GM12878 (cell line): ENCODE measurements at regions of chr9 and their contacts with region 1.

Region 1: GRCh38 chr9:111926421-111926875 is 29.8 kb downstream of the UGCG start:
- DNase-seq: peak; percentile 86
- ATAC-seq: peak; percentile 98
- H3K4me3 ChIP-seq: no peak overlapping the region
- H3K27ac ChIP-seq: peak overlapping the region; percentile 75
- H3K4me1 ChIP-seq: peaks cover 13% of the 10 kb centered on the region; the same call in 1 of the 2 replicates
- H3K27me3 ChIP-seq: no peaks in the 10 kb centered on the region
- CTCF ChIP-seq: no peak
- EP300 ChIP-seq: peak; percentile 73 to 76; a peak in 3 of 4 replicates
- POLR2A ChIP-seq: no peak
- RAD21 ChIP-seq: no peak

Region 2: DNA sequence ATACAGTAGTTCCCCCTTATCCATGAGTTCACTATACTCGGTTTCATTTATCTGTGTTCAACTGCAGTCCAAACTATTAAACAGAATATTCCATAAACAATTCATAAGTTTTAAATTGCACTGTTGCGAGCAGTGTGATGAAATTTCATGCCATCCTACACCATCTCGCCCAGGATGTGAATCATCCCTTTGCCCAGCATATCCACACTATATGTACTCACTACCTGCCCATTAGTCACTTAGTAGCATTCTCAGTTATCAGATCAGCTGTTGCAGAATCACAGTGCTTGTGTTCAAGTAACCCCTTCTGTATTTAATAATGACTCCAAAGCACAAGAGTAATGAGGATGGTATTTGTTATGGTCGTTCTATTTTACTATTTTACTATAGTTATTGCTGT is 183.2 kb before region 1 on chr9:
- CTCF ChIA-PET with region 1: no interaction called
- POLR2A ChIA-PET with region 1: no interaction called
- RAD21 ChIA-PET with region 1: no interaction called
- SMC1A ChIA-PET with region 1: no interaction called
- in situ Hi-C with region 1: no loop called
- intact Hi-C with region 1: no loop called
- DNase-seq: no peak
- ATAC-seq: no peak
- H3K4me3 ChIP-seq: no peak overlapping the region
- H3K27ac ChIP-seq: no peak overlapping the region
- H3K4me1 ChIP-seq: no peaks in the 10 kb centered on the region
- H3K27me3 ChIP-seq: no peaks in the 10 kb centered on the region
- CTCF ChIP-seq: no peak
- EP300 ChIP-seq: no peak
- POLR2A ChIP-seq: no peak
- RAD21 ChIP-seq: no peak

Region 3: DNA sequence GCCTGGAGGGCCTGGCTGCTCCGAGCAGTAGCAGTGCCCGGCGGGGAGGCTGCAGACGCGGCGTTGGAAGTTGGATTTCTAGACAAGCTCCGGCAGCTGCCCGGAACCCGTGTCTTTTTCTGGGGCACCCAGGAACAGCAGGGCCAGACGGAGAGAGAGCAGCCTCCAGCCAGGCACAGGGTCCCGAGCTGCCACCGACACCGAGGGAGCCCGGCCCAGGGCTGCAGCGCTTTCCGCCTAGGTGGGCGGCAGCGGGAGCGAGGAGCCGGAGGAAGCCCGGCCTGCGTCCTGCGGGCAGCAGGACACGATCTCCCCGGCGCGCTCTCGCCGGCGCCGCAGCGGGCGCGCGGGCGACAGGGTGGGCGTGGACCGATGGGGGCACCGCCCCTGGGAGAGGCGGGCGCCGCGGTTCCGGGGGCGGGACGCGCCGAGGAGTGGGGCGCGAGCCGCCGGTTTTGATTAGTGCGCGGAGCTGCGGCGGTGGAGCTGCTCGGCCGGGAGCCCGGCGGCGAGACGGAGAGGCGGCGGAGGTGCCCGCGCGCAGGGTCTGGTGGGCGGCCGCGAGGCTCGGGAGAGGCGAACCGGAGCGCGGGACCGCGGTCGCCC is 30.0 kb before region 1 on chr9 and contains the start of gene UGCG:
- CTCF ChIA-PET with region 1: no interaction called
- POLR2A ChIA-PET with region 1: interaction called, 4 read pairs
- RAD21 ChIA-PET with region 1: interaction called, 6 read pairs
- SMC1A ChIA-PET with region 1: interaction called, 16 read pairs
- in situ Hi-C with region 1: no loop called
- intact Hi-C with region 1: no loop called
- DNase-seq: no peak
- ATAC-seq: peak; percentile 79
- H3K4me3 ChIP-seq: peak within 1 kb of the TSS; percentile 80
- H3K27ac ChIP-seq: peak within 1 kb of the TSS; percentile 93
- H3K4me1 ChIP-seq: no peaks in the 10 kb centered on the region; the same call in 1 of the 2 replicates
- H3K27me3 ChIP-seq: no peaks in the 10 kb centered on the region
- CTCF ChIP-seq: no peak
- EP300 ChIP-seq: 0 out of 4 replicates have a peak, but pooled peaks of 1 of the 2 experiments have one; percentile 14
- POLR2A ChIP-seq: peak; percentile 93
- RAD21 ChIP-seq: 0 out of 2 replicates have a peak, but pooled peaks have one; percentile 2
- polyA plus RNA-seq, gene UGCG: 48.0 to 62.1 TPM

Region 4: DNA sequence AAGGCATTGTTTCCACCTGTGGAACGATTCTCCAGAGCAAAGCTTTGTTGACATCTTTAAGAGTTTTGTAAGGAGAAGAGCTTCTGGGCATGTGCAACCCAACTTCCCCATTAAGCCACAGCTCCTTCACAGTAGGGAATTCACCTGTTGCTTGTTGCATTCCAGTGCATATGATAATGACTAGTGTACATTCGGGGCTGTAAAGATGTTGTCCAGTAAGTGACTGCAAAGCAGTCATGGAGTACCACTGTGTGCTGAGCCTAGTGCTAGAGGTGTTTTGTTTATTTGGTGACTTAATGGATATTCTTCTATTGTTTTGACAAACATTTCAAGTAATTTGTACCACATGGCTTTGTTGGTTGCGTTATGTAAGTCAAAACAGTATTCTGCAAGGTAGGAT is 17.0 kb before region 1 on chr9:
- CTCF ChIA-PET with region 1: interaction called, 25 read pairs
- POLR2A ChIA-PET with region 1: interaction called, 11 read pairs
- RAD21 ChIA-PET with region 1: interaction called, 20 read pairs
- SMC1A ChIA-PET with region 1: interaction called, 43 read pairs
- in situ Hi-C with region 1: no loop called
- intact Hi-C with region 1: no loop called
- DNase-seq: no peak
- ATAC-seq: peak; percentile 65
- H3K4me3 ChIP-seq: peak overlapping the region; percentile 36; the same call in 1 of the 2 replicates
- H3K27ac ChIP-seq: peak overlapping the region; percentile 70; the same call in 1 of the 2 replicates
- H3K4me1 ChIP-seq: peaks cover 62% of the 10 kb centered on the region
- H3K27me3 ChIP-seq: no peaks in the 10 kb centered on the region
- CTCF ChIP-seq: no peak
- EP300 ChIP-seq: no peak
- POLR2A ChIP-seq: no peak
- RAD21 ChIP-seq: no peak

Region 5: DNA sequence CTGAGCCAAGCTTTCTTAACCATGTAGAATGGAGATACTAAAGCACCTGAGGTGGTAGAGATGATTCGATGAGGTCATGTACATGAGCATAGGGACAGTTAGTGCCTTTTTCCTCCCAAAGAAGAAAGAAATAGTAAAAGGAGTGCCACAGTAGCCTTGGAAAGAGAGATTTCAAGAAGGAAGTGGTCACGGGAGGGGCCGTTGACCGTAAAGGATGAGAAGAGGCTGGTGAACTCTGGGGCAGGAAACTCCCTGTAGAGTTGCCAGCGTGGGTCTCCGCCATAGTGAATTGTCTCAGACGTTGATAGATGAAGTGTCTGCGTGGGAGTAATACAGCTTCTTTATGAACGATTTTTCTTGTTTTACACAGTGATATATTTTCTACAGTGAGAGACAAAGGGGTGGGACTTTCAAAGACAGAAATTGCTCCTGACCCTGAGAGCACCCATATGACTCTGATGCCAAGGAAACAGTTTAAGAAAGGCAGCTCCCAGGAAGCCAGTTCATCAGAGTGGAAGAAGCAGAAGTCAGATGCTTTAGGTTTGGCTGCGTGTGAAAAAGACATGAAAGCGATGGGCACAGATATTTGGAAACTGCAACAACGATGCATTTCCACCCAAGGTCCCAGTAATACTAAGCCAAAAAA is 11.5 kb after region 1 on chr9:
- CTCF ChIA-PET with region 1: interaction called, 8 read pairs
- POLR2A ChIA-PET with region 1: interaction called, 16 read pairs
- RAD21 ChIA-PET with region 1: interaction called, 24 read pairs
- SMC1A ChIA-PET with region 1: interaction called, 46 read pairs
- in situ Hi-C with region 1: no loop called
- intact Hi-C with region 1: no loop called
- DNase-seq: peak; percentile 74
- ATAC-seq: peak; percentile 90
- H3K4me3 ChIP-seq: no peak overlapping the region
- H3K27ac ChIP-seq: peak overlapping the region; percentile 80
- H3K4me1 ChIP-seq: peaks cover 21% of the 10 kb centered on the region
- H3K27me3 ChIP-seq: no peaks in the 10 kb centered on the region
- CTCF ChIP-seq: no peak
- EP300 ChIP-seq: peak; percentile 68 to 77; a peak in 2 of 4 replicates
- POLR2A ChIP-seq: no peak; the same call in none of the 2 replicates
- RAD21 ChIP-seq: no peak

Region 6: DNA sequence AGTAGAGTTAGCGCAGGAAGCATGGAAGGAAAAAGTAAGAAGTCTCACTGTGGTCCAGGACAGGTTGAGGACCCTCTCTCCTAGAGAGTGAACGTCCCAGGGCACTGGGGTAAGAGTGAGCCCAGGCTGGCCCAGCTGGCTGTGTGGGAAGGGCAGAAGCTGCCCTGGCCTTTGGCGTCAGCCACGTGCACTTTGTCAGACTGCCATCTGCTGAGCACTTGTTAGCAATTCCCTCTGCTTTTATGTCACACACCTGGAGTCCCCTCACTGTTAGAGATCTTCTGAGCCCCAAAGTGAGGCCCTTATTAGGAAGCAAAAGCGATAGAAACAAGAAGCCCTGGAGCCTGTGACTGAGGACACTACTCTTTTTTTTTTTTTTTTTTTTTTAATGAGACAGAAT is 49.3 kb after region 1 on chr9:
- CTCF ChIA-PET with region 1: interaction called, 7 read pairs
- POLR2A ChIA-PET with region 1: interaction called, 4 read pairs
- RAD21 ChIA-PET with region 1: interaction called, 3 read pairs
- SMC1A ChIA-PET with region 1: interaction called, 22 read pairs
- in situ Hi-C with region 1: no loop called
- intact Hi-C with region 1: no loop called
- DNase-seq: peak; percentile 39
- ATAC-seq: peak; percentile 79
- H3K4me3 ChIP-seq: no peak overlapping the region
- H3K27ac ChIP-seq: no peak overlapping the region
- H3K4me1 ChIP-seq: peaks cover 12% of the 10 kb centered on the region
- H3K27me3 ChIP-seq: no peaks in the 10 kb centered on the region
- CTCF ChIP-seq: peak; percentile 4 to 51 (median 14); a peak in 2 of 6 replicates
- EP300 ChIP-seq: no peak
- POLR2A ChIP-seq: no peak
- RAD21 ChIP-seq: peak; percentile 57

Region 7: DNA sequence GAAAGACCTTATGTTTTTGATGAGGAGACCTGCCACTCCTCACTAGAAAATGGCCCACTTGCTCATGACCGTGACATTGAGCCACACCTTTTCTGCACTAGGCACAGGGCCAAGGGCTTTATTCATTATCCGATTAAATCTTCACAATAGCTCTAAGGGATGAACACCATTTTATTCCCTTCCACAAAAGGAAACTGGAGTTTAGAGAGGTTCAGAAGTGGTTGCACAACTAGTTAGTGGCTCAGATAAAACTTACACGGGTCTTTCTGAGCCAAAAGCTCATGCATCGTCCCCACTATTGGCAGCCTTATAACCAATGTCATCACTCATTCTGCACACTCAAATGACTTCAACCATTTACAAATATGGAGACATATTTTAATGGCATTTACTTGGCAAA is 209.3 kb after region 1 on chr9:
- CTCF ChIA-PET with region 1: no interaction called
- POLR2A ChIA-PET with region 1: no interaction called
- RAD21 ChIA-PET with region 1: no interaction called
- SMC1A ChIA-PET with region 1: no interaction called
- in situ Hi-C with region 1: no loop called
- intact Hi-C with region 1: no loop called
- DNase-seq: no peak
- ATAC-seq: no peak
- H3K4me3 ChIP-seq: no peak overlapping the region
- H3K27ac ChIP-seq: no peak overlapping the region
- H3K4me1 ChIP-seq: no peaks in the 10 kb centered on the region; the same call in 1 of the 2 replicates
- H3K27me3 ChIP-seq: no peaks in the 10 kb centered on the region
- CTCF ChIP-seq: no peak
- EP300 ChIP-seq: no peak
- POLR2A ChIP-seq: no peak
- RAD21 ChIP-seq: no peak